ENCODE measurements at regions of chr7 and their contacts with region 1.

Region 1: GRCh38 chr7:155568842-155569494 is 22.6 kb upstream of the CNPY1 start:
- DNase-seq: peak; percentile 63
- H3K4me3 ChIP-seq: no peak overlapping the region
- H3K27ac ChIP-seq: no peak overlapping the region
- H3K4me1 ChIP-seq: no peaks in the 10 kb centered on the region
- H3K27me3 ChIP-seq: peaks cover 0 to 43% (median 6%) of the 10 kb centered on the region in 7 donors
- CTCF ChIP-seq: no peak
- POLR2A ChIP-seq: no peak

Region 2: DNA sequence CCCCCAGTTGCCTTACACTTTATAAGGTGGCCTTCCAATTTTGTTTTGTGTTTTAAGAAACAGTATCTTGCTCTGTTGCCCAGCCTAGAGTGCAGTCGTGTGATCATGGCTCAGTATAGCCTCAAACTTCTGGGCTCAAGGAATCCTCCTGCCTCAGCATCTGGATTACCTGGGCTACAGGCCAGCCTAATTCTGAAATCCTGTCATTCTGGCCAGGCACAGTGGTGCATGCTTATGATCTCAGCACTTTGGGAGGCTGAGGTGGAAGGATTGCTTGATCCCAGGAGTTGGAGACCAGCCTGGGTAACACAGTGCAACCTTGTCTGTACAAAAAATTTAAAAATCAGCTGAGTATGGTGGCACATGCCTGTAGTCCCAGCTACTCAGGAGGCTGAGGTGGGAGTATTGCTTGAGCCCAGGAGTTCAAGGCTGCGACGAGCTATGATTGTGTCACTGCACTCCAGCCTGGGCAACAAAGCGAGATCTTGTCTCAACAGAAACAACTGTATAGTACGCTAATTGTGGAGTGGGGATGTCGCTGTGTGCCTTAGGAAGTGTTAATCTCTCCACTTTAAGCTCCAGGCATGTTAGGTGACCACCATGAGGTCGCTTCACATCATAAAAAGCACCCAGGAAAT is 50.8 kb after region 1 on chr7:
- intact Hi-C with region 1: loop called (anchors 10 kb)
- DNase-seq: no peak
- H3K4me3 ChIP-seq: no peak overlapping the region
- H3K27ac ChIP-seq: no peak overlapping the region
- H3K4me1 ChIP-seq: no peaks in the 10 kb centered on the region
- H3K27me3 ChIP-seq: peaks cover 0 to 3% (median 0%) of the 10 kb centered on the region in 7 donors
- CTCF ChIP-seq: no peak
- POLR2A ChIP-seq: no peak

Region 3: GRCh38 chr7:155752756-155753445 is 183.9 kb after region 1 on chr7:
- intact Hi-C with region 1: no loop called
- DNase-seq: no peak
- H3K4me3 ChIP-seq: peak overlapping the region in 1 of 8 donors; percentile 0
- H3K27ac ChIP-seq: peak overlapping the region in 5 of 8 donors; percentile 12 to 60 (median 42)
- H3K4me1 ChIP-seq: peaks cover 40 to 96% (median 65%) of the 10 kb centered on the region in 6 donors
- H3K27me3 ChIP-seq: no peaks in the 10 kb centered on the region
- CTCF ChIP-seq: no peak
- POLR2A ChIP-seq: no peak

Measured in spleen (tissue), 13 donors.